Uterus (tissue), 4 donors: ENCODE measurements at regions of chr19 and their contacts with region 1.

Region 1: GRCh38 chr19:4077882-4078614 is 11.3 kb upstream of the ZBTB7A start:
- DNase-seq: peak; percentile 72 to 74
- H3K4me3 ChIP-seq: peak overlapping the region; percentile 57 to 61
- H3K27ac ChIP-seq: peak overlapping the region; percentile 75 to 87
- H3K4me1 ChIP-seq: no peaks in the 10 kb centered on the region
- H3K27me3 ChIP-seq: no peaks in the 10 kb centered on the region
- CTCF ChIP-seq: no peak
- POLR2A ChIP-seq: no peak

Region 2: DNA sequence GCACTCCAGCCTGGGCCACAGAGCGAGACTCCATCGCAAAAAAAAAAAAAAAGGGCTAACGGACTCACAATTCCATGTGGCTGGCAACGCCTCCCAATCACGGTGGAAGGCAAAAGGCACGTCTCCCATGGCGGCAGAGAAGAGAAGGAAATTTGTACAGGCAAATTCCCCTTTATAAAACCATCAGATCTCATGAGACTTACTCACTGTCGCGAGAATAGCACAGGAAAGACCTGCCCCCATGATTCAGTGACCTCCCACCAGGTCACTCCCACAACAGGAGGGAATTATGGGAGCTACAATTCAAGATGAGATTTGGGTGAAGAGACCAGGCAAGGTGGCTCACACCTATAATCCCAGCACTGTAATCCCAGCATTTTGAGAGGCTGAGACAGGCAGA is 163.8 kb before region 1 on chr19:
- intact Hi-C with region 1: no loop called
- DNase-seq: no peak
- H3K4me3 ChIP-seq: no peak overlapping the region
- H3K27ac ChIP-seq: no peak overlapping the region
- H3K4me1 ChIP-seq: no peaks in the 10 kb centered on the region
- H3K27me3 ChIP-seq: no peaks in the 10 kb centered on the region
- CTCF ChIP-seq: no peak
- POLR2A ChIP-seq: no peak

Region 3: DNA sequence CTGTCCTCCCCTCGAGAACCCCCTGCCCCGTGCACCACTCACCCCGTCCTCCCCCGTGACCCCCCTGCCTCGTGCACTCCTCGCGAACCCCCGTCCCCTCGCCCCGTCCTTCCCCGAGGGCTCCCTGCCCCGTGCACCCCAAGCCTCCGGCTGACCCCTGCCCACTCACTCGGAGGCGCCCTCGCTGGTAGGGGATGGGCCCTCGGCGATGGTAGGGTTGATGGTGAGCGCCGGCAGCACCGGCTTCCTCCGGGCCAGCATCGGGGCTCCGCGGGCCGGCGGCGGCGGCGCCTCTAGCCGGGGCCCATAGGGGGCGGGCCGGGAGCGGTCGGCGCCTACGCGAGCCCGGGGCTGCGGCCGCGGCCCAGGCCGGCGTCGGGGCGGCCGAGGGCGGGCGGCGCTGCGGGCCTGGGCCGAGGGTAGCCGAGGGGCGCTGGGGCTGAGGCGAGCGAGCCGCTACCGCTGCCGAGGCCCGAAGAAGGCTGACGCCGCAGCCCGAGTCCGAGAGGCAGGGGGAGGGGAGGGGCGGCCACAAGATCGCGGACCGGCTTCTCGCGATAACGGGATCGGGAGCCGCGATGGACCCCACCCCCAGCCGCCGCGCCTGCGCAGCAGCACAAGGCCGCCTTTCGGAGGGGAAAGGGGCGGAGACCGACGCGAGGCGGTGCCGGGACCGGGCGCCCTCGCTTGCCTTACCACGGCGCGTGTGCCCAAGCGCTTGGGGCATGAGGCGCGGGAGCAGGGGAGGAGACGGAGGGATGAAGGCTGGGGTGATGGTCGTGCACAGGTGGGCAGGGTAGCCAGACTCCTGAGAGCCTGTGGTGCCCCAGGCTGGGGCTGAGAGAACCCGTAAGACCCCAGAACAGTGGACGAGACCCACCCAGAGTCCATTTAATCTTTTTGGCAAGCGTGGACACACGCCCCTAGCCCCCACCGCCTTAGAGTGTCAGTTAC is 45.8 kb after region 1 on chr19 and contains the start of gene MAP2K2:
- intact Hi-C with region 1: loop called (anchors 10 kb)
- DNase-seq: peak; percentile 94 to 96
- H3K4me3 ChIP-seq: peak within 1 kb of the TSS; percentile 76 to 98
- H3K27ac ChIP-seq: peak within 1 kb of the TSS; percentile 81 to 85
- H3K4me1 ChIP-seq: peaks cover 0 to 9% of the 10 kb centered on the region in 2 donors
- H3K27me3 ChIP-seq: no peaks in the 10 kb centered on the region
- CTCF ChIP-seq: no peak
- POLR2A ChIP-seq: peak; percentile 38 to 81
- total RNA-seq, gene MAP2K2: 7.4 to 105 (median 82.4) TPM